ENCODE measurements at regions of chr3 and their contacts with region 1.

Region 1: DNA sequence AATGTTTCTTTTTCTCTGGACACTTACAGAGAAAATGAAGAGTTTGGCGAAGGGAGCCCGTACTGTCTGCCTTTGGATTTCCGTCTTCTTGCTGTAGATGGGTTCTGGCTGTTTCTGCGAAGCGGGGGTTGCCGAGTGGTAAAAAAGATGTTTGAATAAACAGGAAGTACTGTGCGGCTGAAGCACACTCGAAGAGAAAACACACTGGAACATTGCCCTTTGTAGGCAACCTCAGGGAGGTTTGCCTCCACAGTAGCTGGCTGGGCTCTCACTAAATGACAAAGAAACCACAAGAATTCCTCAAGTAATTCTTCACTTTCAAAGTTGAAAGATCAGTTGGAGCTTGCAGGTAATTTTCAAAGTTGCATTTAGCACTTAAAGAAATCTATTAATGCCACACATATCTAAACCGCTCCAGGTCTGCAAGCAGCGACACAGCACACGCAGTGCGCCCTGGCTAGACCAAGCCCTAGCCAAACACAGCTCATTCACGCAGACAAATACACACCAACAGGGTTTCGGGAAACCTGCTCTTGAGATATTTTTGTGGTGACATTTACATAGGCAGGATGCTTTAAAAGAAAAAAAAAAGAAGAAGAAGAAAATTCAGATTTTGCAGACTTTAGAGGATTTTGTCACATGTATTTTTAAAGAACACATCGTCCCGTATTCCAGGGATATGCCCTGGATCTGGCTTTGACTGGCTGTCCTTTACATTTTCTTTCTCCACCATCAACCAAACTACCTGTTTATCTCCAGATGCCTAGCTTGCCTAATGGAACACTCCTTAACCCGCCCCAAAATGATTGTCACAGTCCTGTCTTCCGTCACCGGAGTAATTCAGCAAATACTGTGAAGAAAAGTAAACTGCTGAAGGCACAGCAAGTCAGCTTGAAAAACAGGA is 452.8 kb downstream of the FOXP1 start:
- DNase-seq: peak; percentile 77 to 78
- ATAC-seq: peak; percentile 61

Region 2: DNA sequence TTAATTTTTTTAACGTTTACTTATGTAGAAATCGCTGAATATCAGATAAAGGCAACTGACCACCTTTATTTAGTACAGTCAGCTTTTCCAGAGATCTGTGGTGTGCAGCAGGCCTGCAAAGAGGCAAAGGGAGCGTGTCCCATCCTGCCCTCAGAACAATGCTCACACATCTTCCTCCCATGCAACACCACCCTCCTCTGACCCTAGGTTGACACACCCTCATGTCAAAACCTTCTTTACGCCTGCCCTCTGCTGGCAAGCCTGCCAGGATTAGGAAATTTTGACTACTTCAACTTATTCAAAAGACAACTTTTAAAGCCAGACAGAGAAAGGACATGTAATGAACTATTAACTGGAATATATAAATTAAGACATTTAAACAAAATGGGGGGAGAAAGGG is 60.9 kb before region 1 on chr3:
- intact Hi-C with region 1: loop called in 1 of 2 experiments (anchors 10 kb)
- DNase-seq: peak; percentile 66 to 79
- ATAC-seq: peak; percentile 54

Region 3: GRCh38 chr3:71247221-71247976 is 116.7 kb after region 1 on chr3:
- intact Hi-C with region 1: loop called in 1 of 2 experiments (anchors 10 kb)
- DNase-seq: no peak
- ATAC-seq: peak; percentile 42

Region 4: DNA sequence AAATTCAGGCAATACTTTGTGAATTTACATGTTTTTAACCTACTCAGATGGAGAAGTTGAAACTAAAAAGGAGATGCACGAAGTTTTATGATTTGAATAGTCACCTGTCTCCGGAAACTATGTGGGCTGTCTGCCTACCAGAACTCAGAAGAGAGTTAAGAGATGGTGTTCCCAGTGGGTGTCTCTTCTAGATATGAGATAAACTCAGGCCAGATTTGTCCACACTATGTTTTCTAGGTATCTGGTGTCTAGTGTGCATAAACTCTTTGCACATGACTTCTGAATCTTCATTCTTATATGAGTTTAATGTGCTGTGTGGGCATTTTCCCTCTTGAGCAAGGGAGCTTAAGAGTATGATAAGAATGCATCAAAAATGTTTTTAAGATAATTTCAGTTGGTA is 230.0 kb after region 1 on chr3:
- intact Hi-C with region 1: no loop called
- DNase-seq: no peak
- ATAC-seq: no peak

Region 5: GRCh38 chr3:71710906-71711494 is 580.3 kb after region 1 on chr3:
- intact Hi-C with region 1: no loop called
- DNase-seq: no peak
- ATAC-seq: peak; percentile 90

Measured in left colon (tissue), 2 donors.